Endothelial cell of umbilical vein (primary cell): ENCODE measurements at regions of chr5 and their contacts with region 1.

Region 1: DNA sequence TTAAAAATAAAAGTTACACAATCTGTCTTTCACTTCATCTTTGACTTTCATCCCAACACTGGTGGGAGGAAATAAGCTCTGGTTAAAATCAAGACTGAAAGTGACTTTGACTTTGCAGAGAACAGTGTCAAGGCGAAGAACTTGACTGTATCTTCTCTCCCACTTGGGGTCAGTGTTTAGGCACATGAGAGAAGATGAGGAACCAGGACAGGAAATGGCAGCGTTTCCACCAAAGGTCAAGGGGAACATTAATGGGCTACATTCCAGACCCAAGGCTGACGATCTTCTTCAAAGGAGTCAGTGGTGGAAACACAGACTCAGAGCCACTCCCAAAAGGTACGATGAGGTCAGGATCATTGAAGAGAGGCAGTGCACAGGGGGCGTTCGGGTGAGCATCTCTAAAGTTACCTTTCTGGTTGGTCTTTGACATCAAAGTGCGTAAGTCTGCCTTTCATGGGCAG is 409.6 kb downstream of the ARHGEF28 start:
- DNase-seq: peak; percentile 57
- H3K4me3 ChIP-seq: no peak overlapping the region
- H3K27ac ChIP-seq: no peak overlapping the region
- H3K4me1 ChIP-seq: peaks cover 2% of the 10 kb centered on the region
- H3K27me3 ChIP-seq: peaks cover 0 to 2% of the 10 kb centered on the region in 2 experiments
- CTCF ChIP-seq: peak in 1 of 2 donors; percentile 27
- POLR2A ChIP-seq: no peak

Region 2: DNA sequence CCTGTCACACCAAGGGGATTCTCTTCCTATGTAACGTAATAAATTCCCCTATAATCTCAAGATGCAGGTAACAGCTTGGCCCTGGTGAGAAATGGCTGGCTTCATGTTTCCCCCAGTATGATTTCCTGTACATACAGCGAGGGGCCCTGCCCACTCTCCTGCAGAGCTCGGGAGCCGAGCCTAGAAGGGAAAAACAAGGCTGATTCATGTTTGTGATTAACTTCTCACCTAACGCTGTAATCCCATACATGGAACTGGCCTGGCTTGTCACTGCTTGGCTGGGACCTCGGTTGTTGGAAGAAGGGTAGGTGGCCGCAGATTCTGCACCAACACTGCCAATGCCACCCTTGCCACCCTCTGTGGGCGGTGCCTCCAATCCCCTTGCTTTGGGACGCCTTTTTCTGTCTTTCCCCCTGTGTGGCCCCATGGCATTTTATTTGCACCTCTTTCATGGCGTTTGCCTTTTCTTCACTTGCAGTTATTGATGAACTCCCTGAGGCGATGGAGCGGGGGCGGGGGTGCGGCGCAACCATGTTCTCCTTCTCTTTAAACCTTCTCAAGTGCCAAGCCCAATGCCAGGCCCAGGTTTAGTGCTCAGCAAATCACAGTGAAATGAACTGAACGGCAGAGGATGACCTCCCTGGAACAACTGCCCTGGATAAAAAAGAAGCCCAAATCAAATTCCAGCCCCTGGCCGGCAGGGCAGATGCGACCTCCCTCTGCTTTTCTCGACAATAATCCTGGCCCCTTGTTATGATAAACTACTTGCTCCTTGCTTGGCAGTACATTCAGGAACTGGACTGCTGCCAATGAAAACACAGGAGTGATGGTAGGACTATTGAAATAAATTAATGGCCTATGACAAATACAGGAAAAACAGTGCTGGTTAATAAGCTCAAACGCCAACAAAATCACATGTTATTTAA is 754.5 kb before region 1 on chr5:
- CTCF ChIA-PET with region 1: no interaction called
- POLR2A ChIA-PET with region 1: no interaction called
- dilution Hi-C with region 1: no loop called
- intact Hi-C with region 1: no loop called
- DNase-seq: peak; percentile 99
- H3K4me3 ChIP-seq: peak overlapping the region in 1 of 3 experiments; percentile 12
- H3K27ac ChIP-seq: peak overlapping the region; percentile 30
- H3K4me1 ChIP-seq: peaks cover 17% of the 10 kb centered on the region
- H3K27me3 ChIP-seq: peaks cover 30 to 40% of the 10 kb centered on the region in 2 experiments
- CTCF ChIP-seq: no peak
- POLR2A ChIP-seq: no peak

Region 3: DNA sequence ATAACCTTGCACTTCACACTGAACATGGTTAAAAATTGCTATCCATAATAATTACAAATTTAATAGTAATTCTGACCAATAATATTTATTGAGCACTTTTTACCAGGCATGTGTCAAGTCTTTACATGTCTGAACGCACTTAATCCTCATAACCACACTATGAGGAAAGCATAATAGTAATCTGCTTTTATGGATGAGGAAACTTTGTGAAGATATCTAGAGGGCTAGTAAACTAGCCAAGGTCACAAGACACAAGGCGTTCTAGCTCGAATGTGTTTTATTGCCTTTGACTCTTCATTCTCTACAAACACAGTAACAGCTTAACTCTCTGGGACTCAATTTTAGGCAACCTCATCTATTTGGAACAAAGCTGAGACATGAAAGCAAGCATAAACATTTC is 204.5 kb before region 1 on chr5:
- CTCF ChIA-PET with region 1: no interaction called
- POLR2A ChIA-PET with region 1: no interaction called
- dilution Hi-C with region 1: no loop called
- intact Hi-C with region 1: no loop called
- DNase-seq: no peak
- H3K4me3 ChIP-seq: no peak overlapping the region
- H3K27ac ChIP-seq: no peak overlapping the region
- H3K4me1 ChIP-seq: no peaks in the 10 kb centered on the region
- H3K27me3 ChIP-seq: no peaks in the 10 kb centered on the region
- CTCF ChIP-seq: no peak
- POLR2A ChIP-seq: no peak

Region 4: DNA sequence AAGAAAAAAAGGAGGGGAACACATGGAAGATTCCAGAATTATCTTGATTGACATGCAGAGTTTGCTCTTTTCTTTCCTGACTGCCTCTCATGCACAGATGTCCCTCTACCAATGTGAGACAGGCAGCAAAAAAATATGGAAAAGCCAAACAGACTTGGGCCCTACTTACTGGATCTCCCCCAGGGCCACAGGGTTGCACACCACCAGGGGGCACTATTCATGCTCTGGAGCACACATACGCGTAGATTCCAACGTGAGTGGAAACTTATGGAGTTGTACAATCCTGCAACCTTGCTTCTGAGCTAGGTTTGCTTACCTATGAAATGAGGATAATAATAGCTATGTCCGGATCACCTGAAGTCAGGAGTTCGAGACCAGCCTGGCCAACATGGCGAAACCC is 90.1 kb before region 1 on chr5:
- CTCF ChIA-PET with region 1: no interaction called
- POLR2A ChIA-PET with region 1: no interaction called
- dilution Hi-C with region 1: no loop called
- intact Hi-C with region 1: no loop called
- DNase-seq: no peak
- H3K4me3 ChIP-seq: no peak overlapping the region
- H3K27ac ChIP-seq: no peak overlapping the region
- H3K4me1 ChIP-seq: peaks cover 4% of the 10 kb centered on the region
- H3K27me3 ChIP-seq: no peaks in the 10 kb centered on the region
- CTCF ChIP-seq: peak; percentile 27 to 34
- POLR2A ChIP-seq: no peak

Region 5: DNA sequence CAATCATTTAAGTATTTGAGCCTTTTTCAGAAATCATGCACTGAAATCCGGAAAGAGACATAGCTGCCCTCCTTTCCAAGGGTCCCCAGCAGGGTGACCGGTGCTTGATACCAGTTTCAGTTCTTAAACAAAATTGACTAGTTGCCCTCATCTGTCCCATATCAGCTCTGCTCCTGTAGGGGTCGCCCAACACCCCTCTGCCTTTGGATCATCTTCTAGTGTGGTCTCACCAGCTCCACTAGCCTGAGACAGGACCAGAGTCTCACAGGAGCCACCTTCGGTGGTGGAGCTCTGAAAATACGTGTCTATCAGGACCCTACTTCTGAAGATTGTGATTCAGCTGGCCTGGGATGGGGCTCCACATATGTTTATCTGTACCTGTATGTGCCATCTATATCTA is 176.8 kb after region 1 on chr5:
- CTCF ChIA-PET with region 1: no interaction called
- POLR2A ChIA-PET with region 1: no interaction called
- dilution Hi-C with region 1: no loop called
- intact Hi-C with region 1: loop called (anchors 5 kb)
- DNase-seq: peak; percentile 49
- H3K4me3 ChIP-seq: no peak overlapping the region
- H3K27ac ChIP-seq: no peak overlapping the region
- H3K4me1 ChIP-seq: no peaks in the 10 kb centered on the region
- H3K27me3 ChIP-seq: peaks cover 7 to 11% of the 10 kb centered on the region in 2 experiments
- CTCF ChIP-seq: peak; percentile 31 to 68
- POLR2A ChIP-seq: no peak